ENCODE measurements at regions of chr2 and their contacts with region 1.

Region 1: DNA sequence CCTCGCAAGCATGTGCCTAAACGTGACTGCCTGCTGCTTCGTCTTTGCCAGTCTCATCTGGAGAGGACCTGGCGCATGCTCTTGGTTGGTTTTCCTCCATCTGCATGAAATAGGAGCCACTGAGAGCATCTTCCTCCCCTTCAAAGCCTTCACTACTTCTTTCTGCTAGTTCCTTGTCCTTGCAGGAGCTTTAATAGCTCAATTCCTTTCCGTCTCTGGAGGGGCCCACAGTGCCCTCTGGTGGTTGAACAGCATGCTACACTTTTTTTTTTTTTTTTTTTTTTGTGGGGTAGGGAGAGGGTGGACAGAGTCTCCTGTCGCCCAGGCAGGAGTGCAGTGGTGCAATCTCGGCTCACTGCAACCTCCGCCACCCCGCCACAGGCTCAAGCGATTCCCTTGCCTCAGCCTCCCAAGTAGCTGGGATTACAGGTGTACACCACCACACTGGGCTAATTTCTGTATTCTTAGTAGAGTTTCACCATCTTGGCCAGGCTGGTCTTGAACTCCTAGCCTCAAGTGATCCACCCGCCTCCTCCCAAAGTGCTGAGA is 59.6 kb downstream of the SP110 start:
- DNase-seq: peak; percentile 71
- ATAC-seq: peak; percentile 63
- H3K4me3 ChIP-seq: no peak overlapping the region
- H3K4me3 Mint-ChIP-seq: no peak overlapping the region
- H3K27ac ChIP-seq: no peak overlapping the region
- H3K27ac Mint-ChIP-seq: peak overlapping the region; percentile 15
- H3K4me1 ChIP-seq: peaks cover 0 to 15% of the 10 kb centered on the region in 2 donors
- H3K4me1 Mint-ChIP-seq: peaks cover 21% of the 10 kb centered on the region
- H3K27me3 ChIP-seq: no peaks in the 10 kb centered on the region
- H3K27me3 Mint-ChIP-seq: no peaks in the 10 kb centered on the region
- CTCF ChIP-seq: peak; percentile 89

Region 2: GRCh38 chr2:230007931-230008707 is 152.1 kb before region 1 on chr2:
- CTCF ChIA-PET with region 1: interaction called, 34 read pairs
- POLR2A ChIA-PET with region 1: no interaction called
- intact Hi-C with region 1: loop called (anchors 1 kb)
- DNase-seq: peak; percentile 75
- ATAC-seq: peak; percentile 66
- H3K4me3 ChIP-seq: no peak overlapping the region
- H3K4me3 Mint-ChIP-seq: peak overlapping the region; percentile 56
- H3K27ac ChIP-seq: no peak overlapping the region
- H3K27ac Mint-ChIP-seq: no peak overlapping the region
- H3K4me1 ChIP-seq: no peaks in the 10 kb centered on the region
- H3K4me1 Mint-ChIP-seq: peaks cover 5% of the 10 kb centered on the region
- H3K27me3 ChIP-seq: no peaks in the 10 kb centered on the region
- H3K27me3 Mint-ChIP-seq: no peaks in the 10 kb centered on the region
- CTCF ChIP-seq: peak; percentile 95

Region 3: DNA sequence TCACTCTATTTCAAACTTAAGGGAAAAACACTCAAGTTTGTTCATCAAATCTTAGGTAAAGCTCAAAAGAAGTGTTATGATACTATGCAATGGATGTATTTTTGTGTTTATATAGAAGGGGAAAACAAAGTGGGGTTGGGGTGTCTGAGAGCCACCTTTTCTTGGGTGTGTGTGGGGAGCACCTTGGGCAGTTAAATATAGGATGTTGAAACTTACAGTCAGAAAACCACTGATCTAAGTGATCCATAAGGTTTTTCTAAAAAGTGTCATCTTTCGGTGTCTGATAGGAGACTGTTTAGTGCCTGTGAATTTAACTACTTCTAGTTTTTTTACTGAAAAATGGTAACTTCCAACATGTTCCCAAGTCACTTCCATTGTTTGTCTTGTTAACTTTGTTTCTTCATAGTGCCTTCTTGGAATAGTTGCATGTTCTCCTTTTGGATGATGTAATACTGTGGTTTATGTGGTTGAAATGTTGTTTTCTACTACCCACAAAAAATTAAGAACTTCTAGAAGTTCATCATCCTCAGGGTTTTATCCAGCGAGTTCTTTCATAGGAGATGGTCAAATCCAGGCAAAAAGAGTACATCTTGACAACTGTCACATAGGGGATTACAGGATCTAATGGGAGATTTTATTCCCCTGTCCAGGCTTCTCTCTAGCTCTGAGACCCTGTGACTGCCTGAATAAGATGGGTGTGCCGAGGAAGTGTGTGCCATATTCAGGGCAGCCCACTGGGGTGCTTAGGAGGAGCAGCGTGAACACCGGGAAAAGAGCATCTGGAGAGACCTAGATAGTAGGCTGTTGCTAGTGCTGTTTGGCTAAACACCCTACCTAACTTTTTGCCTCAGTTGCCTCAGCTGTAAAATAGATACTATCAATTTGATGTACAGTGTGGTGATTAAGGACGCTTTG is 598.6 kb after region 1 on chr2:
- CTCF ChIA-PET with region 1: no interaction called
- POLR2A ChIA-PET with region 1: no interaction called
- intact Hi-C with region 1: no loop called
- DNase-seq: no peak
- ATAC-seq: no peak
- H3K4me3 ChIP-seq: no peak overlapping the region
- H3K4me3 Mint-ChIP-seq: no peak overlapping the region
- H3K27ac ChIP-seq: no peak overlapping the region
- H3K27ac Mint-ChIP-seq: peak overlapping the region; percentile 43
- H3K4me1 ChIP-seq: peaks cover 0 to 5% of the 10 kb centered on the region in 2 donors
- H3K4me1 Mint-ChIP-seq: peaks cover 39% of the 10 kb centered on the region
- H3K27me3 ChIP-seq: no peaks in the 10 kb centered on the region
- H3K27me3 Mint-ChIP-seq: no peaks in the 10 kb centered on the region
- CTCF ChIP-seq: no peak

Region 4: GRCh38 chr2:230830428-230830827 is 670.2 kb after region 1 on chr2:
- CTCF ChIA-PET with region 1: no interaction called
- POLR2A ChIA-PET with region 1: no interaction called
- intact Hi-C with region 1: no loop called
- DNase-seq: no peak
- ATAC-seq: no peak
- H3K4me3 ChIP-seq: no peak overlapping the region
- H3K4me3 Mint-ChIP-seq: no peak overlapping the region
- H3K27ac ChIP-seq: no peak overlapping the region
- H3K27ac Mint-ChIP-seq: no peak overlapping the region
- H3K4me1 ChIP-seq: peaks cover 9 to 11% of the 10 kb centered on the region in 2 donors
- H3K4me1 Mint-ChIP-seq: peaks cover 2% of the 10 kb centered on the region
- H3K27me3 ChIP-seq: peaks cover 0 to 44% (median 15%) of the 10 kb centered on the region in 4 experiments
- H3K27me3 Mint-ChIP-seq: peaks cover 41% of the 10 kb centered on the region
- CTCF ChIP-seq: no peak

Measured in B cell (primary cell).